ENCODE measurements at regions of chr12 and their contacts with region 1.

Region 1: DNA sequence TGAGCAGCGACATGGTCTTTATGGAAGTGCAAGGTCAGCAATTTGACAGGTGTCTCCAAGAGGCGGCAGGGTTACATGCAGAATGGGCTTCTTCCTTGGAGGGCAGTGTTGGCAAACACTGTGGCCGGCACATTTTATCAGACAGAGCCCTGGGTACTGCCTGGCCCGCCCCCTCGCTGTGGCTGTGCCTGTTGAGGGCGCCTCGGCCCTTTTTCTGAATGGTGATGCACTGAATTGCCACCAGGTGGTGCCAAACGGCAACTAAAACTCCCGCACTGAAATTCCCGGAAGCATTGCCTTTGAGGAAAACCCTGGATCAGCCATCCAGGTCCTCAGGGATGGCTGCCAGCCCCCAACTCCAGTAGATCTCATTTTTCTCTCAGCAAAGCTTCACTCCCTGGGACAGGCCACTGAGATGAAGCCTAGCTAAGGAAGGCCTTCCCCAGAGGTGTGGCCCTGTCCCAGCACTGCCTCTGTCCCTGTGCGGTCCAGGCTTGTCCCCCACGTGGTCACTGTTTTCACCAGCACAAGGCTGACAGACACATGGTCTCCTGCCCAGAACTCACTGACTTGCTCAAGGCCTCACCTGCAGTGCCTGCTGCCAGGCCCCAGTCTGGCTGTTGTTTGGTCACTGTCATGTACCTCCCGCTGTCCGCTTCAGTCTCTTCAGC is 73.6 kb downstream of the TESC start:
- DNase-seq: peak; percentile 79
- ATAC-seq: peak; percentile 78 to 91
- H3K4me3 ChIP-seq: no peak overlapping the region
- H3K27ac ChIP-seq: peak overlapping the region; percentile 72 to 86
- H3K4me1 ChIP-seq: peaks cover 13% of the 10 kb centered on the region
- CTCF ChIP-seq: peak; percentile 92
- EP300 ChIP-seq: no peak
- POLR2A ChIP-seq: no peak
- RAD21 ChIP-seq: peak; percentile 91 to 94

Region 2: GRCh38 chr12:116599285-116600136 is 426.1 kb before region 1 on chr12:
- CTCF ChIA-PET with region 1: no interaction called
- POLR2A ChIA-PET with region 1: no interaction called
- DNase-seq: peak; percentile 79 to 83
- ATAC-seq: peak; percentile 63 to 87; a peak in 5 of 6 replicates
- H3K4me3 ChIP-seq: no peak overlapping the region
- H3K27ac ChIP-seq: peak overlapping the region; percentile 37 to 76
- H3K4me1 ChIP-seq: peaks cover 38% of the 10 kb centered on the region
- CTCF ChIP-seq: peak; percentile 69
- EP300 ChIP-seq: no peak
- POLR2A ChIP-seq: no peak
- RAD21 ChIP-seq: peak; percentile 73 to 93

Region 3: DNA sequence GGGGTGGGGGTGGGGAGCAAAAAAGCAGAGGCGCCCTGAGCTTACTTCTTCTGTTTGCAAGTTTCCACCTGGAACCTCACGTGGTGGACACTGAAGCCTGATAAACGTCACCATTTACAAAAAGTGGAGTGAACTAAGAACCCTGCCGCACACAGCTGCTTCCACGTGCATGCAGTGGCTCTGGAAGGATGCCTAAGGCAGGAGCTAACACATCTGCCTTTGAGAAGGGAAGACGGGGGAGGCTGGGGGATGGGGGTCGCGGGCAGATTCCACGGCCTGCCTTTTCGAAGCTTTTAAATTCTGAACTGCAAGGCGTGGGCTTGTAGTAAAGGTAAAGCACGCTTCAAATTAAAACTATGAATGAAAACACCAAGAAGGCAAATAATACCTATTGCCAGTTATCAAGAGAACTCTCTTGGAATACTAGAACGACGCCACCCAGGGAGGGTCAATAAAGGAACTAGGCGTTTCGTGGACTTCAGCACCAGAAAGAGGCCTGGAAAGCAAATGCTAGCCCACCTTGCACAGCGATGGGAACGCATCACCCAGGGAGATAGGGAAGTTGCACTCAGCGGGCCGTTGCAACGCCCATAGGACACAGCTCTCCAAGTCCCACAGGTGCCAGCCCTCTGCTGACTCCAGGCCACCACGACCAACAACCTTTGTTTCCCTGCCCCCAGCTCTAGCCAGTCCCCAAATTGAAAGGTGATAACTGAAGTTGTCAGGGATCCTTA is 11.8 kb after region 1 on chr12:
- CTCF ChIA-PET with region 1: interaction called, 34 read pairs
- POLR2A ChIA-PET with region 1: no interaction called
- DNase-seq: no peak
- ATAC-seq: no peak
- H3K4me3 ChIP-seq: no peak overlapping the region
- H3K27ac ChIP-seq: no peak overlapping the region
- H3K4me1 ChIP-seq: peaks cover 5% of the 10 kb centered on the region
- CTCF ChIP-seq: no peak
- EP300 ChIP-seq: no peak
- POLR2A ChIP-seq: no peak
- RAD21 ChIP-seq: no peak

Region 4: GRCh38 chr12:117059156-117059555 is 33.5 kb after region 1 on chr12:
- CTCF ChIA-PET with region 1: interaction called, 10 read pairs
- POLR2A ChIA-PET with region 1: no interaction called
- DNase-seq: no peak
- ATAC-seq: no peak
- H3K4me3 ChIP-seq: no peak overlapping the region
- H3K27ac ChIP-seq: no peak overlapping the region
- H3K4me1 ChIP-seq: no peaks in the 10 kb centered on the region
- CTCF ChIP-seq: no peak
- EP300 ChIP-seq: no peak
- POLR2A ChIP-seq: no peak
- RAD21 ChIP-seq: no peak

Region 5: GRCh38 chr12:117119592-117120198 is 94.1 kb after region 1 on chr12:
- CTCF ChIA-PET with region 1: interaction called, 64 read pairs
- POLR2A ChIA-PET with region 1: no interaction called
- DNase-seq: peak; percentile 56 to 72
- ATAC-seq: peak; percentile 72 to 86
- H3K4me3 ChIP-seq: no peak overlapping the region
- H3K27ac ChIP-seq: peak overlapping the region in 1 of 2 experiments; percentile 78; a peak in 3 of 6 replicates
- H3K4me1 ChIP-seq: peaks cover 40% of the 10 kb centered on the region
- CTCF ChIP-seq: peak; percentile 79
- EP300 ChIP-seq: no peak
- POLR2A ChIP-seq: no peak
- RAD21 ChIP-seq: peak; percentile 79 to 89

Region 6: DNA sequence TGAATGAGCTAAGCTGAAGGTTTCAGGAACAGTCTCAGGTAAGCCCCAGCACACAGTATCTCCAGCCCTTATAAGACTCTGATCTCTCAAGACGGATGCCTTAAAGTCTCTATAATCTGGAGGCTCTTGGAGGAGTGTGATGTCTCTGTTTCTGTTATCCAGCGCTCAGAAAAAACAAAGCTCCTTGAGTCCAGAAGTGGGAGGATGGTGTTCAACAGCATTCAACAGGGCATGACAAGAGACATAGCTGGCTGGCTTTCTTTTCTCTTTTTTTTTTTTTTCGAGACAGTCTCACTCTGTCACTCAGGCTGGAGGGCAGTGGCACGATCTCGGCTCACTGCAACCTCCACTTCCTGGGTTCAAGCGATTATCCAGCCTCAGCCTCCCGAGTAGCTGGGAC is 105.2 kb after region 1 on chr12:
- CTCF ChIA-PET with region 1: interaction called, 13 read pairs
- POLR2A ChIA-PET with region 1: interaction called, 3 read pairs
- DNase-seq: no peak
- ATAC-seq: peak; percentile 35 to 47; a peak in 3 of 6 replicates
- H3K4me3 ChIP-seq: no peak overlapping the region
- H3K27ac ChIP-seq: peak overlapping the region; percentile 41 to 81; a peak in 5 of 6 replicates
- H3K4me1 ChIP-seq: peaks cover 28% of the 10 kb centered on the region
- CTCF ChIP-seq: no peak
- EP300 ChIP-seq: no peak
- POLR2A ChIP-seq: no peak
- RAD21 ChIP-seq: no peak

Measured in A549 (cell line).